Right ventricle myocardium inferior (tissue), 1 donor: ENCODE measurements at regions of chr3 and their contacts with region 1.

Region 1: GRCh38 chr3:123689831-123690230 is 105.0 kb upstream of the HACD2 start:
- DNase-seq: no peak
- ATAC-seq: no peak

Region 2: DNA sequence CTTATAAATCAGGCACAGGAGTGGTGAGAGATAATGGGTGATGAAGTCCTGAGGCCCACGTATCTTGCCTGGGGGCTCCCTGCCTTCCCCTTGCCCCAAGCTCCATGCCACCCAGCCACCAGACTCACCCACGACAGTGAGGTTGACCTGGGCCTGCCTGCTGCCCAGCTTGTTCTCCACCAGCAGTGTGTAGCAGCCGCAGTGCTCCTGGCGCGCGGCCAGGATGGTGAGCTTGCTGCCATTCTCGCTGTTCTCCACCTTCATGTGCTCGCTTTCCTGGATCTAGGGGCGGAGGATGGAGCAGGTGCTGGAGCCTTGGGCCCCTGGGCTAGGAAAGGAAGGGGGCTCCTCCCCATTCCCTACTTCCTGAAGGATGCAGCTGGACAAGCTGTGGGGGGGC is 25.9 kb before region 1 on chr3:
- intact Hi-C with region 1: loop called (anchors 2 kb)
- DNase-seq: no peak
- ATAC-seq: no peak

Region 3: DNA sequence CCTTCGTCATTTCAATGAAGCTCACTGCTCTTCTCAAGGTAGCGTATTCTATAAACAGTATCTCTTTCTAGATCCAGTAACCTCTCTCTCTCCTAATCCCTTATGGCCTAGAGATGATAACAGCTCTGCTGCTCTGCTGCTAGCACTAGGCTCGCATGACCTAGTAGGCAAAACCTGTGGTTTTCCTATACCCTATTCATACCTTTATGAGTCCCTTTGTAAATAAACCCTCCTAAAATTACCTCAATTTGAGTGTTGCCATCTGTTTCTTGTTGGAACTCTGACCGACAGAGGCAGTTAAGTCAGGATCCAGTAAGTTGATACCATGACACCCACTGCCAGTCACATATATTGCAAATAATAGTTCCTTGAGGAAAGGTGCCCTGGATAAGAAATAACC is 263.9 kb after region 1 on chr3:
- intact Hi-C with region 1: no loop called
- DNase-seq: no peak
- ATAC-seq: no peak